Activated CD4-positive, alpha-beta T cell treated with anti-CD3 and anti-CD28 coated beads, Interleukin-2, amount 10 ng/mL, durations not matched to agents 24 days and 14 days (primary cell): ENCODE measurements at regions of chr21 and their contacts with region 1.

Region 1: DNA sequence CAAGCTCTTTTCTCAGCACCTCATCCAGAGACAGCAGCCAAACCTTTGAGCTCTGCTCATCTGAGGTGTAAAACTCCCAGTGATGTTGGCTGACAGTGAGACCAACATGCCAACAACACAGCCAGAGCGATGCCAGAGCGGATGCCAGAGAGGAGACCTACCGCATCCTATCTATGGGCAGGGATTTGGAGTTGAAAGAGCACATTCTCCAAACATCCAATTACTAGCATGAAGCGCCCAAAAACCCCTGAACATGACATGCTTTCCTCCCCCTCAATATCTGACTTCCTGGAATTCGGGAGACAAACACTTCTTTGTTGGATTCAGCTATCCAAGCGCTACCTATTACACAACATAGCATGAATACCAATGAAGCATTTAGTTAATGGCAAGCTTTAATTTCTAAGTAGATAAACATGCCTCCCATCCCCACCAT is 23.1 kb upstream of the PAXBP1 start:
- DNase-seq: no peak
- H3K4me3 Mint-ChIP-seq: no peak overlapping the region
- H3K27ac Mint-ChIP-seq: no peak overlapping the region
- H3K4me1 Mint-ChIP-seq: no peaks in the 10 kb centered on the region
- H3K27me3 Mint-ChIP-seq: no peaks in the 10 kb centered on the region

Region 2: DNA sequence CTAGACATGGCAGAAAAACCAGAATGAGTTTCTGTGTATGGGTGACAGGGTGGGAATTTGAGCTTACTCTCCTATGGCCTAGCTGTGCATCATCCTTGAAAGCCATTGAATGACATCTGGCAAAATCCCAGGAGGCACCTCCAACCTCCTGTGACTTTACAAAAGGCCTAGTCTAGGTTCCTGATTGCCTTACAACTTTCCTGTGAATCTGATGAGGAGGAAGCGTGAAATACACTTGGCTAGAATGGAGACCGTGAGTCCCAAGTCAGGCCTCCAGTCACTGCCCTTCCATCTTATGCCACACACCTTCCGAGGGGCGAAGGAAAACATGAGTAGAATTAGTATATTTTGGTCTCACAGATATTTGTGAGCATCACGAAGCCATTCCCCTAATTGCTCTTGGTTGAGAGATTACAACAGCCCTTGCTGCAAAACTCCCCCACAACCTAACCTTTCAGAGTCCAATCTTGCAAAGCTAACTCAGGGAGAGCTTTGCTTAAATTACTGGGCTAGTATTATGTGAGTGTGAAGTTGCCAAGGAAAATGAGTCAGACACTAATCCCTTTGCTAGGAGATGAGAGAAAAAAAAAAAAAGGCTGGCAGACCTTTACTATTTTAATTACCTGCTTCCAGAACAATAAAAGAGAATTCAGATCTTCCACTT is 13.2 kb after region 1 on chr21:
- intact Hi-C with region 1: no loop called
- DNase-seq: no peak
- H3K4me3 Mint-ChIP-seq: no peak overlapping the region
- H3K27ac Mint-ChIP-seq: no peak overlapping the region
- H3K4me1 Mint-ChIP-seq: peaks cover 10% of the 10 kb centered on the region
- H3K27me3 Mint-ChIP-seq: no peaks in the 10 kb centered on the region

Region 3: GRCh38 chr21:32819694-32820093 is 25.0 kb after region 1 on chr21:
- intact Hi-C with region 1: loop called (anchors 2 kb)
- DNase-seq: no peak
- H3K4me3 Mint-ChIP-seq: no peak overlapping the region
- H3K27ac Mint-ChIP-seq: no peak overlapping the region
- H3K4me1 Mint-ChIP-seq: peaks cover 3% of the 10 kb centered on the region
- H3K27me3 Mint-ChIP-seq: peaks cover 2% of the 10 kb centered on the region

Region 4: DNA sequence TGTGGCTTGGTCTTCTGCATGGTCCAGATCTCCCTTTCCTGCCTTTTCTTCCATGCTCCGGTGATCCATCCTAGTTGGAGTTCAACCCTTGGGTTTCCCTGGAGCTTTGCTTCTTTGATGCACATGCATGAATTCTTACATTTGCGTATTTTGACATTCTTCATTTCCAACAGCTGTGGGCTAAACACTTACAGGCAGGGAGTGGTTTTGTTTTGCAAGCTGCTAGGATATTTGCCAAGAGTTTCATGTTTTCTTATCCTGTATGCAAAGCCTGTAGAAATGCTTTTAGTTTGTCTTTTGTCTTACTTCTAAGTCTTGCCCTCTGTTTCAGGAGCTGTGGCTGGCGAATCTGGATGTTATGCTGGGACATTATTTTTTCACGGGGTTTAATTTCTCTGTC is 67.2 kb after region 1 on chr21:
- intact Hi-C with region 1: no loop called
- DNase-seq: no peak
- H3K4me3 Mint-ChIP-seq: no peak overlapping the region
- H3K27ac Mint-ChIP-seq: no peak overlapping the region
- H3K4me1 Mint-ChIP-seq: no peaks in the 10 kb centered on the region
- H3K27me3 Mint-ChIP-seq: peaks cover 16% of the 10 kb centered on the region